HCT116 (cell line): ENCODE measurements at regions of chr10 and their contacts with region 1.

Region 1: GRCh38 chr10:101141616-101142532 is 10.8 kb downstream of the TLX1 start:
- DNase-seq: peak; percentile 81
- ATAC-seq: peak; percentile 96
- H3K4me3 ChIP-seq: 0 out of 4 replicates have a peak overlapping the region, but pooled peaks of 1 of the 2 experiments have one; percentile 6
- H3K27ac ChIP-seq: peak overlapping the region; percentile 41
- H3K4me1 ChIP-seq: peaks cover 3 to 23% of the 10 kb centered on the region in 2 experiments; a peak in 3 of 4 replicates
- H3K27me3 ChIP-seq: no peaks in the 10 kb centered on the region
- CTCF ChIP-seq: peak; percentile 99 to 100 (median 99)
- POLR2A ChIP-seq: no peak
- RAD21 ChIP-seq: peak; percentile 99

Region 2: GRCh38 chr10:100812978-100813377 is 328.9 kb before region 1 on chr10:
- CTCF ChIA-PET with region 1: no interaction called
- POLR2A ChIA-PET with region 1: no interaction called
- RAD21 ChIA-PET with region 1: no interaction called
- intact Hi-C with region 1: no loop called
- DNase-seq: no peak
- ATAC-seq: peak; percentile 67
- H3K4me3 ChIP-seq: no peak overlapping the region
- H3K27ac ChIP-seq: no peak overlapping the region
- H3K4me1 ChIP-seq: no peaks in the 10 kb centered on the region
- H3K27me3 ChIP-seq: no peaks in the 10 kb centered on the region
- CTCF ChIP-seq: peak; percentile 21 to 36 (median 36); a peak in 4 of 6 replicates
- POLR2A ChIP-seq: no peak
- RAD21 ChIP-seq: no peak; the same call in none of the 2 replicates

Region 3: GRCh38 chr10:101042667-101043355 is 99.1 kb before region 1 on chr10:
- CTCF ChIA-PET with region 1: interaction called, 80 read pairs
- POLR2A ChIA-PET with region 1: interaction called, 12 read pairs
- RAD21 ChIA-PET with region 1: interaction called, 22 to 23 read pairs
- intact Hi-C with region 1: loop called (anchors 1 kb)
- DNase-seq: peak; percentile 97
- ATAC-seq: peak; percentile 91
- H3K4me3 ChIP-seq: peak overlapping the region; percentile 55 to 59
- H3K27ac ChIP-seq: peak overlapping the region; percentile 84
- H3K4me1 ChIP-seq: peaks cover 26 to 33% of the 10 kb centered on the region in 2 experiments
- H3K27me3 ChIP-seq: no peaks in the 10 kb centered on the region
- CTCF ChIP-seq: no peak
- POLR2A ChIP-seq: peak; percentile 82
- RAD21 ChIP-seq: no peak

Region 4: DNA sequence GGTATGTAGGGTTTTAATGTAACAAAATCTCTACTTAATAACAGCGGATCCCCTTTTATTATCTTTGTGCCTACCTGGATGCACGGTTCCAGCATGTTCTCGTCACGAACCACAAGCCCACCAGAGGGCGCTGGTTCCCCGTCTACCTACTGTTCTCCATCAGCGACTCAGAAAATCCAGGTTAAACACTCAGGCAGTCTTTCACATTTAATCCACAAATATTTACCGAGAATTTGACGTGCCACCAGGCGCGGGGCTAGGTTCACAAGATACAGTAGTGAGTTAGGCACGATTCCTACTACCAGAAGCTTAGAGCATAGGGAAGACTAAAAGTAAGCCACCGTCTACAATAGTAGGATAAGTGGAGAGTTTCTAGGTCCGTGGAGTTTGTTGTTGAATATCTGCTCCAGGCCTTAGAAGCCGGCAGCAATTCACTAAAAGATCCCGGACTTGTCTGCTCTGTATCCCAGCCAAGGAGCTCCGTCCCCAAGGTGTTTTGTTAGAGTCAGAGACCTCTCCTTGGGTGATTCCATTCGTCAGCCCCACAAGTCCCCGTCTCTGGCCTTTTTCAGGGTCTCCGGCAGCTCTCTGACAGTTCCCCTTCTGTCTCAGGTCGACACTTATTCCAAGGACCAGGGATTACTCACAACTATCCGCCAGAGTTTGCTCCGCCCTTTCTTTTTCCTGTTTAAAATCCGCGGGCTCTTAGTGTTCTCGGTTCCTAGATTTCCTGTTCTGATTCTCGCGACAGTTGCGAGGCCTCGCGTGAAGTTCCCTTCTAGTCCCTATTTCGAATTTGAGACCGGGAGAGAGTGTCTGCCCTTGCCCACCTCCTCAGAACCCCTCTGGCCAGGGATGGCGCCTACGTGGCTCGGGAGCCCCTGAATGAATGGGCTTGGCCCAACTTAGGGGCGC is 81.6 kb before region 1 on chr10:
- CTCF ChIA-PET with region 1: interaction called, 54 read pairs
- POLR2A ChIA-PET with region 1: interaction called, 20 read pairs
- RAD21 ChIA-PET with region 1: interaction called, 6 to 9 read pairs
- intact Hi-C with region 1: loop called (anchors 1 kb)
- DNase-seq: peak; percentile 98
- ATAC-seq: peak; percentile 67
- H3K4me3 ChIP-seq: peak overlapping the region; percentile 80 to 84
- H3K27ac ChIP-seq: peak overlapping the region; percentile 99
- H3K4me1 ChIP-seq: peaks cover 42 to 51% of the 10 kb centered on the region in 2 experiments
- H3K27me3 ChIP-seq: no peaks in the 10 kb centered on the region
- CTCF ChIP-seq: peak in 2 of 3 experiments; percentile 98 to 99; a peak in 4 of 6 replicates
- POLR2A ChIP-seq: peak; percentile 37
- RAD21 ChIP-seq: no peak

Region 5: GRCh38 chr10:101095542-101096213 is 46.2 kb before region 1 on chr10:
- CTCF ChIA-PET with region 1: interaction called, 414 read pairs
- POLR2A ChIA-PET with region 1: interaction called, 36 read pairs
- RAD21 ChIA-PET with region 1: interaction called, 44 to 92 read pairs
- intact Hi-C with region 1: loop called (anchors 1 kb)
- DNase-seq: peak; percentile 94
- ATAC-seq: peak; percentile 100
- H3K4me3 ChIP-seq: peak overlapping the region; percentile 23 to 36
- H3K27ac ChIP-seq: peak overlapping the region; percentile 20; the same call in 1 of the 2 replicates
- H3K4me1 ChIP-seq: peaks cover 0 to 24% of the 10 kb centered on the region in 2 experiments; a peak in 2 of 4 replicates
- H3K27me3 ChIP-seq: peaks cover 6% of the 10 kb centered on the region; the same call in 1 of the 2 replicates
- CTCF ChIP-seq: peak; percentile 97 to 99 (median 99)
- POLR2A ChIP-seq: no peak
- RAD21 ChIP-seq: peak; percentile 91

Region 6: DNA sequence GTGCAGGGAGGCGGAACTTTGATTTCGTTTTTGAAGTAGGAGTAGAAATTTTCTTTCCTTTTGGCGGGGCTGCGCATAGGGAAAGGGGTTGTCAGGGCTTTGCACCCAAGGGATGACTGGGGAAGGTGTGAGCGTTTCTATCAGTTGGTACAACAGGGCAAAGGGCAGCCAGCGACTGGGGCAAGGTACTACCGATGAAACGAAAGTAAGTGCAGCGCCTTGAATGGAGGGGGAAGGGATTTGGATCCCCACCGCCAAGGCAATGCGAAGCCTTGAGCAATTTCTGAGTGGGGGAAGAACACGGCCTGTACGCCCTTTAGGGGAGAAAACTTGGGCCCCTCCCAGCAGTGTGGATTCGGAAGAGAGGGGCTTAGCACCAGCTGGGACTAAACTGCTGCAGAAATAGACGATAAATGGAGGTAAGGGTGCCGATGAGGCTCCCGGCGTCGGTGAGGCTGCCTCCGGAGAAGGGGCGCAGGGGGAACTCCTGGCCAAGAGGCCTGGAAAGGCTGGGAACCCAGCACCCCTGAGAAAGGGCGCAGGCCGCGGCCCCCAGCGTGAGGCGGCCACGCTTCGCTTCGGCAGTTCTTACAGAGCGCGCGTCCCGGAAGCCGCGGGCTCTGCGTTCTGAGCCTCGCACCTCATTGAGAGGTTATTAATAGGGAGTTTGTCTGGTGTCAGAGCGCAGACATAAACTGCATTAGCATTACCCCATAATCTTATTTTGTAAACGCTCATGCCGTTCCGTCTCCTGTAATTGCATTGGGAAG is 20.8 kb before region 1 on chr10:
- CTCF ChIA-PET with region 1: interaction called, 15 read pairs
- POLR2A ChIA-PET with region 1: no interaction called
- RAD21 ChIA-PET with region 1: interaction called in 1 of 2 experiments, 4 read pairs
- intact Hi-C with region 1: no loop called
- DNase-seq: no peak
- ATAC-seq: no peak
- H3K4me3 ChIP-seq: no peak overlapping the region
- H3K27ac ChIP-seq: no peak overlapping the region
- H3K4me1 ChIP-seq: peaks cover 0 to 12% of the 10 kb centered on the region in 2 experiments; a peak in 1 of 4 replicates
- H3K27me3 ChIP-seq: 0 out of 2 replicates have a peak, but pooled peaks cover 5% of the 10 kb centered on the region
- CTCF ChIP-seq: no peak
- POLR2A ChIP-seq: no peak
- RAD21 ChIP-seq: no peak

Region 7: DNA sequence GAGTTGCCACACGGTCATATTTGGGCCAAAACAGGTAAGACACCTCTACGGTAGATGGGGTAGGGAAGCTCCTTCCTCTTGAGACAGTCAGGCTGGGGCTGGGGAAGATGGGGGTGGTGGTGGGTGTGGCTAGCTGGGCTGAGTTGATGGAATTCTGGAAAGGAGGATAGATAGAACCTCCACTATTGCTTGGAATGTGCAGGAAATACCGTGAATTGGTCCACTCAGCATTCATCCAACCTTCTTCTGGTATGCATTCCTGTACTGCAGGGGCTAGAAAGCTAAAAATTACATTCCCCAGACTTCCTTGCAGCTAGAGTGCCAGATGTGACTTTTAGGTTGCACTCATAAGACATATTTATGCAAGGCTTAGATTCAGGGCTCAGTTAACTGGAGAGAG is 14.0 kb after region 1 on chr10:
- CTCF ChIA-PET with region 1: interaction called, 50 read pairs
- POLR2A ChIA-PET with region 1: no interaction called
- RAD21 ChIA-PET with region 1: no interaction called
- intact Hi-C with region 1: no loop called
- DNase-seq: no peak
- ATAC-seq: no peak
- H3K4me3 ChIP-seq: no peak overlapping the region
- H3K27ac ChIP-seq: no peak overlapping the region
- H3K4me1 ChIP-seq: no peaks in the 10 kb centered on the region
- H3K27me3 ChIP-seq: no peaks in the 10 kb centered on the region
- CTCF ChIP-seq: no peak
- POLR2A ChIP-seq: no peak
- RAD21 ChIP-seq: no peak